CD14-positive monocyte (primary cell): ENCODE measurements at regions of chr19 and their contacts with region 1.

Region 1: GRCh38 chr19:13162518-13163314 is 12.5 kb downstream of the IER2 start:
- DNase-seq: peak; percentile 87 to 91 (median 87)
- H3K4me3 ChIP-seq: peak overlapping the region; percentile 39 to 83 (median 47)
- H3K4me3 Mint-ChIP-seq: peak overlapping the region; percentile 76 to 87
- H3K27ac ChIP-seq: peak overlapping the region; percentile 65 to 90
- H3K27ac Mint-ChIP-seq: peak overlapping the region; percentile 86 to 98 (median 89)
- H3K4me1 ChIP-seq: peaks cover 62 to 79% of the 10 kb centered on the region in 2 donors
- H3K4me1 Mint-ChIP-seq: peaks cover 65% of the 10 kb centered on the region
- H3K27me3 ChIP-seq: no peaks in the 10 kb centered on the region
- H3K27me3 Mint-ChIP-seq: no peaks in the 10 kb centered on the region
- CTCF ChIP-seq: no peak

Region 2: GRCh38 chr19:13207846-13208671 is 45.3 kb after region 1 on chr19:
- intact Hi-C with region 1: loop called (anchors 2 to 5 kb)
- DNase-seq: peak; percentile 81 to 88 (median 84)
- H3K4me3 ChIP-seq: peak overlapping the region; percentile 46 to 77 (median 62)
- H3K4me3 Mint-ChIP-seq: peak overlapping the region; percentile 76 to 83
- H3K27ac ChIP-seq: peak overlapping the region; percentile 83 to 90
- H3K27ac Mint-ChIP-seq: peak overlapping the region; percentile 88 to 98 (median 96)
- H3K4me1 ChIP-seq: peaks cover 11 to 30% of the 10 kb centered on the region in 2 donors
- H3K4me1 Mint-ChIP-seq: peaks cover 13% of the 10 kb centered on the region
- H3K27me3 ChIP-seq: no peaks in the 10 kb centered on the region
- H3K27me3 Mint-ChIP-seq: peaks cover 0 to 6% (median 2%) of the 10 kb centered on the region in 3 donors
- CTCF ChIP-seq: no peak